Mammary epithelial cell (primary cell): ENCODE measurements at regions of chr14 and their contacts with region 1.

Region 1: GRCh38 chr14:56474419-56475022 is 105.1 kb upstream of the TMEM260 start:
- DNase-seq: peak; percentile 13
- H3K4me3 ChIP-seq: no peak overlapping the region
- H3K27ac ChIP-seq: no peak overlapping the region
- H3K4me1 ChIP-seq: no peaks in the 10 kb centered on the region
- H3K27me3 ChIP-seq: no peaks in the 10 kb centered on the region
- CTCF ChIP-seq: peak; percentile 76 to 82

Region 2: DNA sequence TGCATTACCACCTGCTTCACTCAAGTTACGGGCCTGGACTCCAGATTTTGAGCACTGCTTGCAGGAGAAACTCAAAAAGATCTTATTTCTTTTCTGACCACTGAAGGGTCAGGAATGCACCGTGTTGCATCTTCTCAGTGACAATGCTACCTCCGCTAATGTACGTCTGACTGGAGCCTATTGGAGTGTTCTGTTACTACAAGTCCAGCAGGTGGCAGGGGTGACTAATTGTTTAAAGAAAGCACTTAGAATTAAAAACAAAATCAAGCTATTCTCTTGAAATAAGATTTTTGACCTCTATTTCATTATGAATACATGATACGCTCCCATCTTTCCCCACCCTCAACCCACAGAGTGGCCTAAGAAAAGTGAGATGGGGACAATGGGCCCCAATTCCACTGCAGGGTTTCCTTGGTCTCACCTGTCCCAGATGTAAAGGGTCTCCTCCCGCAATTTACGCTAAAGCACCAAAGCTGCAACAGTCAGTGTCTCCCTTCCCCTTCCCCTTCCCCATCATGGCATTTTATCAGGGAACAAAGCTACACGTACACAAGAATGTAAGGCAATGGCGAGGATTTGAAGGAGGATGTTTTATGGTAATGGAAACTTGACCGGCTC is 1036.3 kb before region 1 on chr14:
- CTCF ChIA-PET with region 1: interaction called, 10 read pairs
- dilution Hi-C with region 1: no loop called
- in situ Hi-C with region 1: loop called (anchors 10 to 25 kb)
- intact Hi-C with region 1: loop called (anchors 1 kb)
- DNase-seq: peak; percentile 42
- H3K4me3 ChIP-seq: no peak overlapping the region
- H3K27ac ChIP-seq: no peak overlapping the region
- H3K4me1 ChIP-seq: no peaks in the 10 kb centered on the region
- H3K27me3 ChIP-seq: no peaks in the 10 kb centered on the region
- CTCF ChIP-seq: peak; percentile 67 to 70

Region 3: DNA sequence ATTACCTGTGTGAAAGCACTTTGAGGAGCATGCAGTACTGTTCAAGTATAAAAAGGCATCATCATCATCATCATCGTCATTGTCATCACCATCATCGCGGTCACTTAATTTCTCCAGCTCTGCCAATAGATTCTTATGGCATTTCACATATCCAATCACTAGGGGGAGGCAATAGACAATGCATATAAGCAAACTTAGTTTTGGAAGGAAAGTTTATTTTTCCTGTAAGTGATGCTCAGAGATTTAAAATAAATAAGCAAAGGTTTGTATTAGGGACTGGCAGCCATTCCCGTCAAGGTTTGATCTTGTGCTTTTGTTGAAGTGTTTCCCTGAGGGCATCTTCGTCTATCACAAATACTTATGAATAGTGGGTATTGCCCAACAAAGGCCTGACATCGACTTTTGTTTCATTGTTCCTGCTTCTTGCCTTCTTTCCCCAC is 767.1 kb before region 1 on chr14:
- CTCF ChIA-PET with region 1: interaction called, 5 read pairs
- dilution Hi-C with region 1: no loop called
- in situ Hi-C with region 1: loop called in 1 of 2 experiments (anchors 25 kb)
- intact Hi-C with region 1: loop called (anchors 1 kb)
- DNase-seq: peak; percentile 47
- H3K4me3 ChIP-seq: no peak overlapping the region
- H3K27ac ChIP-seq: no peak overlapping the region
- H3K4me1 ChIP-seq: peaks cover 18% of the 10 kb centered on the region
- H3K27me3 ChIP-seq: no peaks in the 10 kb centered on the region
- CTCF ChIP-seq: peak; percentile 69 to 73

Region 4: DNA sequence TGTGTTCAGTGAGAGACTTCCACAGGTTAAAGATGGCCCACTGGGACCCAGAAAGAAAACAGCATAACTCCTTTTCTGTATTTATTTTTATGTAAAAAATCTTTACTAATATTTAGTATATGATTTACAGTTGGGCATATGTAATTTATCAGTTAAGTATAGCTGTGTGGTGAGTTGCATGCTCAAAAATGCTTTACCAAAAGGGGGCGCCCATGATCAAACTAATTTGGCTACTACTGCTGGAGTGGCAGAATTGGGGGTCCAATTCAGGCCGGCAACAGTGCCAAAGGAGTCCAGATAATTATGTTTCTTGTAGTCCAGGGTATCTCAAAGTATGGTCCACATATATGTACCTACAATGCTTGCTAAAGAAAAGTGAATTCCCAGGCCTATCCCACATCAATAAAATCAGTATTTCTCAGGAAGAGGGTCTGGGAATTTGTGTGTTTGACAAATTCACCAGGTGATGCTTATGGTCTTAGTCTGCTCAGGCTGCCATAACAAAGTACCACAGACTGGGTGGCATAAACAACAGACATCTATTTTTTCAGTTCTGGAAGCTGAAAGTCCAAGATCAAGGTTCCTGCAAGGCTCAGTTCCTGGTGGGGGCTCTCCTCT is 742.5 kb before region 1 on chr14:
- CTCF ChIA-PET with region 1: interaction called, 12 read pairs
- dilution Hi-C with region 1: no loop called
- in situ Hi-C with region 1: no loop called
- intact Hi-C with region 1: no loop called
- DNase-seq: no peak
- H3K4me3 ChIP-seq: no peak overlapping the region
- H3K27ac ChIP-seq: no peak overlapping the region
- H3K4me1 ChIP-seq: no peaks in the 10 kb centered on the region
- H3K27me3 ChIP-seq: peaks cover 7% of the 10 kb centered on the region
- CTCF ChIP-seq: peak; percentile 63 to 71

Region 5: GRCh38 chr14:56247468-56248200 is 226.9 kb before region 1 on chr14:
- CTCF ChIA-PET with region 1: no interaction called
- dilution Hi-C with region 1: no loop called
- in situ Hi-C with region 1: no loop called
- intact Hi-C with region 1: loop called (anchors 5 kb)
- DNase-seq: no peak
- H3K4me3 ChIP-seq: no peak overlapping the region
- H3K27ac ChIP-seq: no peak overlapping the region
- H3K4me1 ChIP-seq: no peaks in the 10 kb centered on the region
- H3K27me3 ChIP-seq: no peaks in the 10 kb centered on the region
- CTCF ChIP-seq: peak; percentile 18 to 42